Right cardiac atrium (tissue), 5 donors: ENCODE measurements at regions of chr11 and their contacts with region 1.

Region 1: DNA sequence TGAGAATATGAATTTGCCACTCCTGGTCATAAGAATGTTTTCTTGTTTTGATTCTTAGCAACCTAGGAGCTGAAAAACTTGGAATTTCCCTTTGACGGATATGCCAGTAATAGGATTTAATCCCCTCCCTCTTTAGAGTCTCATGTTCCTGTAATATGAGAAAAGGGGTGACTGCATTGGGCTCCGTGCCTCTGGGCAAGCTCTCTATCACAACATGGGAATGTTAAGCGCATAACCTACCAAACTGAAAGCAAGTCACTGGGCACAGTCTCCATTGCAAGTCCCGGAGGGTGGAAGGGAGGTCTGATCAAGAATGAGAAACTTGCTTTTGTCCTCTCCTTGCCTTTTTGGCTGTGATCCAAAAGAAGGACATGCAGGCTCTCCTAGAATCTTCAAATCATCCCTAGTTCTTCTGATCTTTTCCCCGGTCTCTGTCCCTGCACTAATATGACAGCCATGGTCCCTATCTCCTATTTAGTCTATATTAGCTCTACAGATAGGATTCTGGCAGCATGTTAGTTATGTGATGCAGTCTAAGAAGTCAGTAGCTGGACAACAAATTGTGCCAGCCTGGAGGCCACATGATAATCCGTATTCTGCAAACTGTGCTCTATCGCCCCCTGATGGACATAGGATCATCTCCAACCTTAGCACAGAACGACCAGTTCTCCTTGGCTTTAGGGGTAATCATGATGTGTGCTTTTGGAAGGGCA is 11.7 kb downstream of the OR10D3 start:
- DNase-seq: peak; percentile 35 to 57 (median 56)
- ATAC-seq: peak; percentile 62 to 74
- H3K4me3 ChIP-seq: no peak overlapping the region
- H3K27ac ChIP-seq: no peak overlapping the region
- H3K4me1 ChIP-seq: no peaks in the 10 kb centered on the region
- H3K27me3 ChIP-seq: no peaks in the 10 kb centered on the region

Region 2: GRCh38 chr11:124070915-124071635 is 123.8 kb before region 1 on chr11:
- intact Hi-C with region 1: loop called in 3 of 4 experiments (anchors 10 kb)
- DNase-seq: peak; percentile 55 to 69 (median 56)
- ATAC-seq: no peak
- H3K4me3 ChIP-seq: no peak overlapping the region
- H3K27ac ChIP-seq: no peak overlapping the region
- H3K4me1 ChIP-seq: no peaks in the 10 kb centered on the region
- H3K27me3 ChIP-seq: peaks cover 2% of the 10 kb centered on the region

Region 3: DNA sequence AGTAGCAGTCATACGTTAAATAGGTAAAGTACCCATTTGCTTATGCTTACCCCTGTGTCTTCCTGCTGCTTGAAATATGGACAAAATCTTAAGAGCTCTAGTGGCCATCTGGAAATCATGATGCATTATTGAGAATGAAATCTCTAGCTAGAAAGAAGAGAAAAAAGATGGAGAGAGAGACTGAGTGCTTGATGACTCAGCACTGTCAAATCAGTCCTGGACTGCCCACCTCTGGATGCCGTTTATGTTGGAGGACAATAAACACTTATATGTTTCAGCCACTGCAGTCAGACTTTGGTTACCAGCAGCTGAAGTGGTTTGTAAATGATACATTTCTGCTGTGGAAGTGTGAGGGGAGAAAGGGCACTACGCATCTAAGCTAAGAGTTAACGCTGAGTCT is 226.2 kb after region 1 on chr11:
- intact Hi-C with region 1: no loop called
- DNase-seq: no peak
- ATAC-seq: no peak
- H3K4me3 ChIP-seq: no peak overlapping the region
- H3K27ac ChIP-seq: no peak overlapping the region
- H3K4me1 ChIP-seq: no peaks in the 10 kb centered on the region
- H3K27me3 ChIP-seq: no peaks in the 10 kb centered on the region